Activated CD4-positive, alpha-beta T cell treated with anti-CD3 and anti-CD28 coated beads, Interleukin-2, amount 10 ng/mL, durations not matched to agents 7 days and 5 days (primary cell): ENCODE measurements at regions of chr12 and their contacts with region 1.

Region 1: DNA sequence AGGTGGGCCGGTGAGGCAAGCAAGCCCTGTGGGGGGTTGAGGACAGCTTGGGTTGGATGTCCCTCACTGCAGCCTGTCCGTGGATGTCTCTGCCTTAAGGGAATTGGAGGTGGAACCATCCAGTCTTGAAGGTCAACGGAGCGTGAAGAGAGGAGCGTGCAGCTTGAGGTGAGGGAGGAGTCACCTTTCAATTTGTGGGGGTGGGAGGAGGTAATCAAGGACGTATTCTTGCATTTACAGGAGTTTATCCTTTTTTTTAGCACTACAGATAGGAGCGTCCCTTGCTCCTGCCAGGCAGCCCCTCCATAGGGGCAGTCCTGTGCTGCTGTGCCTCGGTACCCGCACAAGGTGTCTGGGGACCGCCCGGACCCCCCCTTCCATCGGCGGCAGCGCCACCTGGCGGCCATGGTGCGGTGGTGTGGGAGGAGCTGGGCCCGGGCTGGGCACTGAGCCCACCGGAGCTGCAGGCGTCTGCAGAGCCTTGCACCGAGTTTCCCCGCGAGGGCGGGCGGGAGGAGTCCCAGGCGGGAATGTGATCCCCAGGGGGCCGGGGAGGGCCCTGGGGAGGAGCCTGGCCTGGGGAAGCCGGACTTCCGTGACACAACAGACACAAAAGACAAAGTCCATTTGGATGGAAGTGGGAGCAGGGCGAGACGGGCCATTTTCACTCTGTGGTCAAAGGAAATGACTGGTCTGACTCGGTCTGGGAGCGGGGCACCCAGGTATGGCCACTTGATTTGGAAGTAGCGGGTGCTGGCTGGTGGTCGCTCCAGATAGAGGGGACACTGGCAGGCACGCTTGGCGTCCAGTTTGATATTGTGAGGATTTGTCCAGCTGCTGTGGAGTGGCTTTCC is 923 bp downstream of the DNAJC22 start:
- DNase-seq: peak; percentile 75
- H3K4me3 Mint-ChIP-seq: peak overlapping the region; percentile 48
- H3K27ac Mint-ChIP-seq: no peak overlapping the region
- H3K4me1 Mint-ChIP-seq: peaks cover 24% of the 10 kb centered on the region
- H3K27me3 Mint-ChIP-seq: peaks cover 66% of the 10 kb centered on the region

Region 2: DNA sequence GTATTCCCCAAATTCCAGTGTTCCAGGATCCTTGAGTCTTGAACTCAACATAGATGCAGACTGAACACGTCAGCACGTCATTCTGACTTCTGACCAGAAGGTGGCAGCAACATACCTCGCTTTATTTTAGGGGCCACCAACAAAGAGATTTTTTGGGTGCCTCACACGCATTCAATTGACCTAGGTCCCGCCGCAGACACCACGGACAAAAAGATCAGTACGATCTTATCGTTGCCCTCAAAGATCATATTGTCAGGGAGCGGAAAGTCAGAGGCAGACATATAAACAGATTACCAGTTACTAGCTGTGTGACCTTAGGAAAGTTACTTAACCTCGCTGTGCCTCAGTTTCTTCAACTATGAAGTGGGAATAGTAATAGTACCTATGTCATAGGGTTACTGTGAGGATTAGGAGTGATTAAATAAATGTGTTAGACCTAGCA is 59.2 kb before region 1 on chr12:
- CTCF ChIA-PET with region 1: interaction called, 47 read pairs
- POLR2A ChIA-PET with region 1: interaction called, 6 read pairs
- DNase-seq: peak; percentile 81
- H3K4me3 Mint-ChIP-seq: no peak overlapping the region
- H3K27ac Mint-ChIP-seq: no peak overlapping the region
- H3K4me1 Mint-ChIP-seq: peaks cover 3% of the 10 kb centered on the region
- H3K27me3 Mint-ChIP-seq: peaks cover 31% of the 10 kb centered on the region

Region 3: DNA sequence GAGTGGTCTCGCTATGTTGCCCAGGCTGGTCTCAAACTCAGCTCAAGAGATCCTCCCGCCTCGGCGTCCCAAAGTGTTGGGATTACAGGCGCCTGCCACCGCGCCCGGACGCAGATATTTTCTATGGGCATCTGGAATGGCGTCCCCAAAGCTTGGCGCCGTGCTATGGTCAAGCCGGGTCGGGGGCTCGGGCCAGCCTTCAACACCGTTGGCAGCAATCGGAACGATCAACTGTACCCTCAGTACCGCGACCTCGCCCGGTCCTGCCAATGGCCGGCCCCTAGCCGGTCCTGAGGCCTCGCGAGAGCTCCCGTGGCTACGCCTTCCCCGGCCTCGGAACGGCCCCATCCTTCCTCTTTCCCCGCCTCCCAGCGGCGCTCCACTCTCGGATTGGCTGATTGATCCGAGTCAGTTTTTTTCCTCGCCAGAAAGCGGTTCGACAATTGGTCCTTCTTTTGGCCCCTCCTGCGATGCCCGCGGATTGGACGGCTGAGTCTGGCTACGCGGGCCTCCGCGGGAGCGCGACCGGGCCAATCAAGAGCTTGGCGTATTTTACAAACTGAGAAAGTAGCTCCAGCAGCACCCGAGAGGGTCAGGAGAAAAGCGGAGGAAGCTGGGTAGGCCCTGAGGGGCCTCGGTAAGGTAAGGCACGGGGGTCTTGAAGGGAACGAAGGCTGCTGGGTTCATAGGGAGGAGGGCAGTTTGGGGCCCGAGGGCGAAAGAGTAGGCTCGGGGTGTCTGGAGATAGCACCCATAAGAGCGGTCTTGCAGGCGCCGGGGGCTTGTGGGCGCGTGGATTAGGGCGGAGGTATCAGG is 24.7 kb before region 1 on chr12 and contains the start of gene TROAP:
- CTCF ChIA-PET with region 1: interaction called, 17 read pairs
- POLR2A ChIA-PET with region 1: no interaction called
- DNase-seq: peak; percentile 99
- H3K4me3 Mint-ChIP-seq: peak within 1 kb of the TSS; percentile 97
- H3K27ac Mint-ChIP-seq: peak within 1 kb of the TSS; percentile 93
- H3K4me1 Mint-ChIP-seq: peaks cover 32% of the 10 kb centered on the region
- H3K27me3 Mint-ChIP-seq: no peaks in the 10 kb centered on the region
- total RNA-seq, gene TROAP: 111 to 115 TPM

Region 4: DNA sequence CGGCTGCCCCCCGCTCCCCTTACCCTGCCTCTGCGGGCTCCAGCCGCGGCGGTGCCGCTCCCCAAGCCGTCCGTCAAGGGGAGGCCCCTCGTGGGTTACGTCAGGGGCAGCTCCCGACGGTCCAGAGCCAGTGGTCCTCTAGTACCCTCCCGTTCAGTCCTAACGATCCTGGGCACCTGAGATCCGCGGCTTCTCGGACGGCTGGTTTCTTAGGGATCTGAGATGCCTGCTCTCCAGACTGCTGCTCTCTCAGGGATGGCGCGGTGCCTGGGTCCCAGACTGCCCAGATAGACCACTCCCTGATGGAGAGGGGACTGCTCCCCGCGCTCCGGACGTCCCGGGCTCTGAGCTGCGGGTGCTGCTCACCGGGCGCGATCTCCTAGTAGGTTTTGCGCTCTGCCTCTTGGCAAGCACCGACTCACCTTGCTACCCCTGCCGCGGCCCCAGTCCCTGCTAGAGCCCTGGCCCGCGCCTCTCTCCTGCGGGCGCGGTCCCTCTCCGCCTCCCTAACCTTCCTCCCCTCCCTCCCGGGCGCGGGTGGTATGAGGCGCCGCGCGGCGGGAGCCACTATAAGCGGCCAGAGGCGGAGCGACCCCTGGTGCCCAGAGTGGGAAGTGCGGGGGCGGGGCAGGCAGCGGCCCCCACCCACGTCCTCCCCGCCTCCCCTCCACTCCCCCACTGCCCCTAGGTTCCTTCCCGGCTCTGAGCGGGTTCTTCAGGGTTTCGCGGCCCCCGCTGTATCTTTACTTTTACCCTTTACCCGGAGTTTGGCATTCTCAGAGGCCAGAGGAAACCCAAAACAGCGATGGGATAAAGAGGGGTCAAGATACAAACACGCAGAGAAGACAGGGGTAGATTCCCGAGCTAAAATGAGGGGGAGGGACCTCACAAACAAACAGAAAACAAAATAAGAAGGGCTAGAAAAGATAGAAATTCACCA is 10.7 kb before region 1 on chr12 and contains the start of gene C1QL4:
- CTCF ChIA-PET with region 1: interaction called, 30 read pairs
- POLR2A ChIA-PET with region 1: no interaction called
- DNase-seq: peak; percentile 86
- H3K4me3 Mint-ChIP-seq: peak within 1 kb of the TSS; percentile 53
- H3K27ac Mint-ChIP-seq: peak within 1 kb of the TSS; percentile 43
- H3K4me1 Mint-ChIP-seq: peaks cover 31% of the 10 kb centered on the region
- H3K27me3 Mint-ChIP-seq: peaks cover 86% of the 10 kb centered on the region
- total RNA-seq, gene C1QL4: not detected

Region 5: GRCh38 chr12:49366652-49367380 is 19.2 kb after region 1 on chr12:
- CTCF ChIA-PET with region 1: interaction called, 14 read pairs
- POLR2A ChIA-PET with region 1: no interaction called
- DNase-seq: peak; percentile 88
- H3K4me3 Mint-ChIP-seq: peak overlapping the region; percentile 90
- H3K27ac Mint-ChIP-seq: peak overlapping the region; percentile 97
- H3K4me1 Mint-ChIP-seq: peaks cover 43% of the 10 kb centered on the region
- H3K27me3 Mint-ChIP-seq: no peaks in the 10 kb centered on the region

Region 6: DNA sequence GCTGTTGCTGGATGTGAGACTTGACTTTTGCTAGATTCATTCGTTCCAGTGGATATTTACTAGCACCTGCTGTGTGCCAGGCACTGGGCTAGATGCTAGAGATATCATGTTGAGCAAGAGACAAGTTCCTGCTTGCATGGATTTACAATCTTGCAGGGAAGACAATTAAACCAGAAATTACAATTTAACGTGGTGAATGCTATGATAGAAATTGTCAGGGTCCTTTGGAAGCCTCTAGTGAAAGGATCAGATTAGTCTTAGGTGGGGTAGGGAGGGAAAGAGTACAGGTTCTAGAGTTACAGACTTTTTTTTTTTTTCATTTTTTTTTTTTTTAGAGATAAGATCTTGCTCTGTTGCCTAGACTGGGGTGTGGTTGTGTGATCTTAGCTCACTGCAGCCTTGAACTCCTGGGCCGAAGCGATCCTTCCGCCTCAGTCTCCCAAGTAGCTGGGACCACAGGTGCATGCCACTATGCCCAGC is 56.4 kb after region 1 on chr12:
- CTCF ChIA-PET with region 1: no interaction called
- POLR2A ChIA-PET with region 1: no interaction called
- DNase-seq: peak; percentile 15
- H3K4me3 Mint-ChIP-seq: no peak overlapping the region
- H3K27ac Mint-ChIP-seq: no peak overlapping the region
- H3K4me1 Mint-ChIP-seq: peaks cover 15% of the 10 kb centered on the region
- H3K27me3 Mint-ChIP-seq: no peaks in the 10 kb centered on the region

Region 7: DNA sequence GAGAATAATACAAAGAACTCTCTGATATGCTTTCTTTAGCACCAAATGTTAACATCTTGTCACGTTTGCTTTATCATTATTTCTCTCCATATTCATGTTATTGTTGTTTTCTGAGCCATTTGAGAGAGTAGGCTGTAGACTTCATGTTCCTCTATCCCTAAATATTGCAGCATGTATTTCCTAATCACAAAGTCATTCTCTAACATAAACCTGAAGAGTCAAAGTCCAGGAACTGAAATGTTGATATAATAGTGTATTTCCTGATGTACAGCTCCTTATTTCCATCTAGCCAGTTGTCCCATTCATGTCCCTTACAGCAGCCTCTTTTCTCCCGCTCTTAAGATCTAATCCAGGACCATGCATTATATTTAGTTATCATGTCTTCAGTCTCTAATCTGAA is 92.4 kb after region 1 on chr12:
- CTCF ChIA-PET with region 1: no interaction called
- POLR2A ChIA-PET with region 1: no interaction called
- DNase-seq: no peak
- H3K4me3 Mint-ChIP-seq: no peak overlapping the region
- H3K27ac Mint-ChIP-seq: no peak overlapping the region
- H3K4me1 Mint-ChIP-seq: no peaks in the 10 kb centered on the region
- H3K27me3 Mint-ChIP-seq: no peaks in the 10 kb centered on the region